ENCODE measurements at regions of chr11 and their contacts with region 1.

Region 1: DNA sequence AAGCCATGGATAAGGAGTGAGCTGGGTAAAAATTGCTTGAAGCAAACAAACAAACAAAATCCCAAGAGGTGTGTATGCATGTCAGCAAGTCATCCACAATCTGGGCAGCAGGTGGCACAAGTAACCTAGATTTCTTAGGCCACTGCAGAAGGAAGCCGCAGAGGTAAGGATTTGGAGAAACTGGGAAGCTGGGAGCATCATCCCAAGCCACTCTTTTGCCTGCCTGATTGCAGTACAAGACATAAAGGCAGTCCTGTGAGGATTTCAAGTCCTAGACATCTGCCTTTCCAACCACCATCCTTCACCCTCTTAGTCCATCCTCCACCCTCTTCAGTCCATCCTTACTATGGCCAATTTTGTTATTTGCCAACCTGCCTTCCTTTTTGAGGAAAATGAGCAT is 67.2 kb upstream of the BMAL1 start:
- DNase-seq: peak; percentile 34
- H3K4me3 ChIP-seq: no peak overlapping the region
- CTCF ChIP-seq: peak; percentile 63

Region 2: GRCh38 chr11:13229711-13230318 is 19.4 kb after region 1 on chr11:
- CTCF ChIA-PET with region 1: interaction called, 191 read pairs
- POLR2A ChIA-PET with region 1: no interaction called
- DNase-seq: no peak
- H3K4me3 ChIP-seq: no peak overlapping the region
- CTCF ChIP-seq: no peak

Region 3: GRCh38 chr11:13316528-13316961 is 106.1 kb after region 1 on chr11:
- CTCF ChIA-PET with region 1: interaction called, 10 read pairs
- POLR2A ChIA-PET with region 1: no interaction called
- DNase-seq: no peak
- H3K4me3 ChIP-seq: no peak overlapping the region
- CTCF ChIP-seq: no peak

Region 4: GRCh38 chr11:13335319-13335718 is 124.9 kb after region 1 on chr11:
- CTCF ChIA-PET with region 1: interaction called, 329 read pairs
- POLR2A ChIA-PET with region 1: interaction called, 20 read pairs
- DNase-seq: no peak
- H3K4me3 ChIP-seq: no peak overlapping the region
- CTCF ChIP-seq: peak; percentile 73

Region 5: DNA sequence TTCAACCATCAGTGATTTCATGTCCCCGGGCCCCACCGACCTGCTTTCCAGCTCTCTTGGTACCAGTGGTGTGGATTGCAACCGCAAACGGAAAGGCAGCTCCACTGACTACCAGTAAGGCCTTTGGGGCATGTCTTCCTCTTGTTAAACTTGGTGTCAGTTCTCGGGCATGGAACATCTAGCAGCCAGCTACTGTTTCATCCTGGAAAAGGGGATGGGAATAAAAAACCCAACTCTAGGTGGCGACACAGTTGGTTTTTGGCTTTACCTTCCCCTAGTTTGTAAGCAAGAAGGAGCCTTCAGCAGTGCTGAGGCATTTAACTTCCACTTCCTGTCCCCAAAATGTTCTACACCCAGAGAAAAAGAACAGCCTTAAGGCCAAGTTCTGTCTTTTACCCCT is 143.9 kb after region 1 on chr11:
- CTCF ChIA-PET with region 1: interaction called, 96 read pairs
- POLR2A ChIA-PET with region 1: no interaction called
- DNase-seq: no peak
- H3K4me3 ChIP-seq: no peak overlapping the region
- CTCF ChIP-seq: peak; percentile 19

Region 6: DNA sequence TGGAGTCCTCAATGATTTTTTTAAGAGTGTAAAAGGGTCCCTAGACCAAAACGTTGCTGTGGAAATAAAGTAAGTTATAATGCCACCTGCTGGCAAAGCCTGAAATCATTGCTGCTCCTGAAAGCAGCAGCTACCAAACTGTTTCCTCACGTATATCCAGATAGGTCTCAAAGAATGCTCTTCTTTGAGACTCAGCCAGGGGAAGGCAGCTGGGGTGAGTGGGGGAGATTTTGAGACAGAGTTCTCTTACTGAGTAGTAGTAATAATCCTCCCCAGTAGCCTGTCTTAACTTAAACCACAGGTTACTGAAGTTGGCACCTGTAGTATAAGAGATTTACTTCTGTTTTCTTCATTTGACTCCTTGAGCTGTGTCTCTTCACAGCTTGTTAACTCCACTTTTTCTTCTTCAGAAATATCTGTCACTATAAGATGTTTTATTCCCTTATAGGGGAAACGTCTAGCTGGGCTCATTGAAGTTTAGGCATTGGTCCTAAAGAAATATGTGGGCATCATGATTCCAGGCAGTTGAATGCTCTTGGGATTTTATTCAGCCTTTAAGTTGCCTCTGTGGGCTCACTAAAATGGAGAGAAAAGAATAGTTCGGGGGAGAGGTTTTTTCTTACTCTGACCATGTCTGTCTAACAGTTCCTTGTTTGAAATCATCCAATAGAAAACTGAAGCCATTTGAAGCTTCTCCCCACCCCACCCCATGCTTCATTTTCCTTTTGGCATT is 174.7 kb after region 1 on chr11:
- CTCF ChIA-PET with region 1: interaction called, 157 read pairs
- POLR2A ChIA-PET with region 1: no interaction called
- DNase-seq: peak; percentile 16
- H3K4me3 ChIP-seq: no peak overlapping the region
- CTCF ChIP-seq: peak; percentile 58

Measured in AG04449 (cell line).